Activated CD4-positive, alpha-beta T cell treated with anti-CD3 and anti-CD28 coated beads for 36 hours (primary cell): ENCODE measurements at regions of chr11 and their contacts with region 1.

Region 1: DNA sequence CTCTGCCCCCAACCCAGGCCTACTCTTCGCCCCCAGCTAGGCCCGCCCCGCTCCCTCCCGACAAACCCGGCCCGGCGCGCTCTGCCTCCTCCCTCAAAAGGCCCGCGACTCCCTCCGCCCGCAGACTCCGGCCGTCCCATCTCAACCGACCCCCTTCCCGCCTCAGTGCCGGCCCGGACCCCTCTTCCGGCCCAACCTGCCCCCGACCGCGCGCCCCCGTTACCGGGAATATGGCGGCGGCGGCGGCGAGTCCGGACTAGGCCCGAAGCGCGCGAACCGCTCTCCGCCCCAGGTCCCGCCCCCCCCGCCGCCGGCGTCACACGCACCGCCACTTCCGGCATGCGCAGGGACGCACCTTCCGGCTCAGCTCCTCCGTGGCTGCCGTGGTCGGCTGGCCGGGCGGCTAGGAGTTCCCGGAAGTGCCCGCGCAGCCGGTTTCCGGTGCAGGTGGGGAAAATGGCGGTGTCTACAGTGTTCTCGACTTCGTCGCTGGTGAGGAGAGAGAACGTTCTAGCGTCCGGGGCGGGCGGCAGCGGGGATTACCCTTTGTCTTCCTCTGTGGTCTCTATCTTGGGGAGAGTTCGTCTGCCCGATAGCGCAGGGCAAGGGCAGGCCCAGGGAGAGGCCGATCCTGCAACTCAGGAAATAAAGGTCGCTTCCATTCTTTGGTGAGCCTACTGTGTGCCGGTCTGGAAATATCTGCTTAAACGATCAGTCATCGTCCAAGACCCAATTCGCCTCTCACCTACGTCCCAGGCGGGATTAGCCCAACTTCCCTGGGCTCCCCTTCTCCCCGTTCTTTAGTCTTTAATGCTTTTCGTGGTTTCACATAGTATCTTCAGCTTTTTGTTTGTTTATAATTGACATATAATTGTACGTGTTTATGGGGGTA is at the starts of genes CPSF7 and SDHAF2:
- DNase-seq: peak; percentile 99
- ATAC-seq: peak; percentile 92
- H3K4me3 Mint-ChIP-seq: peak within 1 kb of the TSS; percentile 92
- H3K27ac Mint-ChIP-seq: peak within 1 kb of the TSS; percentile 97
- H3K4me1 Mint-ChIP-seq: peaks cover 59% of the 10 kb centered on the region
- H3K27me3 Mint-ChIP-seq: no peaks in the 10 kb centered on the region
- total RNA-seq, gene CPSF7: 108 to 179 TPM
- total RNA-seq, gene SDHAF2: 23.6 to 33.6 TPM

Region 2: GRCh38 chr11:59668950-59669610 is 1760.9 kb before region 1 on chr11 and contains the start of gene PATL1:
- CTCF ChIA-PET with region 1: no interaction called
- POLR2A ChIA-PET with region 1: no interaction called
- intact Hi-C with region 1: loop called in 1 of 2 experiments (anchors 5 kb)
- DNase-seq: peak; percentile 99
- ATAC-seq: peak; percentile 93
- H3K4me3 Mint-ChIP-seq: peak within 1 kb of the TSS; percentile 81
- H3K27ac Mint-ChIP-seq: peak within 1 kb of the TSS; percentile 92
- H3K4me1 Mint-ChIP-seq: peaks cover 37% of the 10 kb centered on the region
- H3K27me3 Mint-ChIP-seq: no peaks in the 10 kb centered on the region
- total RNA-seq, gene PATL1: 59.8 to 88.7 TPM

Region 3: DNA sequence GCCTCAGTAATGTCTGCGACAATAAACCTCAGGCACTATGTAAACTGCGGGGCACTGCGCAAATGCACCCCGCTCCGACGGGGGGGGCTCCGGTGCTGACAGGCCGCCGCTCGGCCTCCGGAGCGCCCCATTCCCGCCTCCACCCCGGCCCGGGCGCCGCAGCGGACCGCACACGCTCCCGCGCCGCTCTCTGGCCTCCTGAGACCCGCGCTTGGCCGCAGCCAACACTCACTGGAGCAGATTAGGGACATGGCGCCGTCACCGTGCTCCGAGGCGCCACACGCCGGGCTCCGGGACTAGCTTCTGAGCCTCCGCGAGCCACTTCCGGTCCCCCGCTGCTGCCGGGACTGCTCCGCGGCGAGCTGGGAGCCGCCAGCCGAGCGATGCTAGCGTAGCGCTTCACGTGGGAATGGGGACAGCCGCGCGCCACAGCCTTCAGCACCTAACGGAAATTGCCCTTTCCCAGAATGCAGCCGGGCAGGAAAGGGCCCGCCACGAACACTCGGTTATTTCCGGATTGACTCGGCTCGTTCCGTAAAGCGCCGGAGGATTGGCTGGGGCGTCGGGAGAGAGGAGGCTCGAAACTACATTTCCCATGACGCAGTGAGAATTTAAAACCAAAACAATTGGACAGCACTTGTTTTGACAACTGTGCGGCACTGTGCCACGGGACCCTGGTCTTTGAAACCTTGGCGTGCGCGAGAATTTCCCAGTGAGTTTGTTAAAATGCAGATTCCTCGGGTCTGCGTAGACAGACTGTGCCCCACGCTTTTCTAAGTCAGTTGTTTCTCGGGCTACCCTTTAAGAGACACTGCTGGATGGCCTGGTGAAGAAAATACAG is 523.6 kb before region 1 on chr11 and contains the start of gene PRPF19:
- CTCF ChIA-PET with region 1: interaction called, 3 read pairs
- POLR2A ChIA-PET with region 1: no interaction called
- intact Hi-C with region 1: loop called (anchors 2 to 10 kb)
- DNase-seq: peak; percentile 99
- ATAC-seq: peak; percentile 97
- H3K4me3 Mint-ChIP-seq: peak within 1 kb of the TSS; percentile 86
- H3K27ac Mint-ChIP-seq: peak within 1 kb of the TSS; percentile 94
- H3K4me1 Mint-ChIP-seq: peaks cover 41% of the 10 kb centered on the region
- H3K27me3 Mint-ChIP-seq: no peaks in the 10 kb centered on the region
- total RNA-seq, gene PRPF19: 148 to 197 TPM

Region 4: GRCh38 chr11:61392981-61393595 is 36.8 kb before region 1 on chr11:
- CTCF ChIA-PET with region 1: interaction called, 18 read pairs
- POLR2A ChIA-PET with region 1: interaction called, 3 read pairs
- intact Hi-C with region 1: loop called in 1 of 2 experiments (anchors 1 kb)
- DNase-seq: peak; percentile 35
- ATAC-seq: peak; percentile 50
- H3K4me3 Mint-ChIP-seq: peak overlapping the region; percentile 84
- H3K27ac Mint-ChIP-seq: peak overlapping the region; percentile 87
- H3K4me1 Mint-ChIP-seq: peaks cover 19% of the 10 kb centered on the region
- H3K27me3 Mint-ChIP-seq: no peaks in the 10 kb centered on the region

Region 5: GRCh38 chr11:61509043-61510029 is 79.4 kb after region 1 on chr11:
- CTCF ChIA-PET with region 1: interaction called, 8 read pairs
- POLR2A ChIA-PET with region 1: interaction called, 3 read pairs
- intact Hi-C with region 1: loop called in 1 of 2 experiments (anchors 2 kb)
- DNase-seq: peak; percentile 88
- ATAC-seq: peak; percentile 94
- H3K4me3 Mint-ChIP-seq: no peak overlapping the region
- H3K27ac Mint-ChIP-seq: no peak overlapping the region
- H3K4me1 Mint-ChIP-seq: peaks cover 6% of the 10 kb centered on the region
- H3K27me3 Mint-ChIP-seq: peaks cover 41% of the 10 kb centered on the region

Region 6: GRCh38 chr11:61581030-61581928 is 151.3 kb after region 1 on chr11 and contains the start of gene SYT7:
- CTCF ChIA-PET with region 1: interaction called, 3 read pairs
- POLR2A ChIA-PET with region 1: no interaction called
- intact Hi-C with region 1: loop called in 1 of 2 experiments (anchors 1 kb)
- DNase-seq: peak; percentile 97
- ATAC-seq: peak; percentile 91
- H3K4me3 Mint-ChIP-seq: peak within 1 kb of the TSS; percentile 64
- H3K27ac Mint-ChIP-seq: no peak within 1 kb of the TSS
- H3K4me1 Mint-ChIP-seq: peaks cover 12% of the 10 kb centered on the region
- H3K27me3 Mint-ChIP-seq: peaks cover 35% of the 10 kb centered on the region
- total RNA-seq, gene SYT7: 0.04 TPM in 1 of 2 experiments, not detected in the other